ENCODE measurements at regions of chr4 and their contacts with region 1.

Region 1: DNA sequence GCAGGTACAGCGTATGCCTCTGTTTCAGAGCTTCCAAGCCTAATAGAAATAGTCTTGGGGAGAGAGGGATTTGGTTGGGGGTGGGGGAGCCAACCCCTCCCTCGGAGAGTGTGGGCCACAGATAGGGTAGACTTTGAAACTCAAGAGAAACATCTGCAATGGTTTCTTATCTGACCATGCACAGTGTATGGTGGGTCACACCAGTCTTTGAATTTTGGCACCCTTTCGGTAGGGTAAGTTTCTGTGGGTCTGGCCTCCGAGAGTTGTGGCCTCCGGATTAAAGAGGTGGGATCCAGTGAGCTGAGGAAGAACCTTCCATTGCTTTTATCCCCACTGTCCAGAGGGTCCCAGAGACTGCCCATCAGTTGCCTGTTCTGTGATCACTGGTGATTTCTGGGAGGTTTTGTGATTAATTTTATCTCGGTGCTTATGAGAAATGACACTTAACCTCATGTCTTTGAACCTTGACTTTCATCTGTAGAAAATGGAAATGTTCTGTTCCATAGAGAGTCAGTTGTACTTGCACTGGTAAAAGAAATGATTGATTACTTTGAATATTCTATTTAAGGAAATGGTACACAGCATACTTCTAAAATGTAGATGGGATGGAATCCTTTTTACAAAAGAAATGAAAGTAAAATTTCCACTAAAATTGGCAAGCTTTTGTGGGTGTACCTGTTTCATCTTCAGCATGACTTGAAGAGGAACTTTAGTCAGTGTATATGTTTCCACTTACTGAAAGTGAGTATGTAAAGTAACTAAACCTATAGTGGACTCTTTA is 62.7 kb downstream of the TMEM131L start:
- DNase-seq: no peak
- ATAC-seq: peak; percentile 55
- H3K4me3 Mint-ChIP-seq: peak overlapping the region; percentile 75
- H3K27ac Mint-ChIP-seq: peak overlapping the region; percentile 91
- H3K4me1 Mint-ChIP-seq: peaks cover 87% of the 10 kb centered on the region
- H3K27me3 Mint-ChIP-seq: no peaks in the 10 kb centered on the region

Region 2: GRCh38 chr4:153541456-153542096 is 12.7 kb after region 1 on chr4:
- CTCF ChIA-PET with region 1: interaction called, 22 read pairs
- POLR2A ChIA-PET with region 1: interaction called, 4 read pairs
- DNase-seq: peak; percentile 38
- ATAC-seq: peak; percentile 66
- H3K4me3 Mint-ChIP-seq: no peak overlapping the region
- H3K27ac Mint-ChIP-seq: peak overlapping the region; percentile 27
- H3K4me1 Mint-ChIP-seq: peaks cover 60% of the 10 kb centered on the region
- H3K27me3 Mint-ChIP-seq: no peaks in the 10 kb centered on the region

Region 3: GRCh38 chr4:153628796-153629315 is 100.0 kb after region 1 on chr4:
- CTCF ChIA-PET with region 1: no interaction called
- POLR2A ChIA-PET with region 1: no interaction called
- DNase-seq: no peak
- ATAC-seq: no peak
- H3K4me3 Mint-ChIP-seq: no peak overlapping the region
- H3K27ac Mint-ChIP-seq: peak overlapping the region; percentile 18
- H3K4me1 Mint-ChIP-seq: no peaks in the 10 kb centered on the region
- H3K27me3 Mint-ChIP-seq: no peaks in the 10 kb centered on the region

Region 4: DNA sequence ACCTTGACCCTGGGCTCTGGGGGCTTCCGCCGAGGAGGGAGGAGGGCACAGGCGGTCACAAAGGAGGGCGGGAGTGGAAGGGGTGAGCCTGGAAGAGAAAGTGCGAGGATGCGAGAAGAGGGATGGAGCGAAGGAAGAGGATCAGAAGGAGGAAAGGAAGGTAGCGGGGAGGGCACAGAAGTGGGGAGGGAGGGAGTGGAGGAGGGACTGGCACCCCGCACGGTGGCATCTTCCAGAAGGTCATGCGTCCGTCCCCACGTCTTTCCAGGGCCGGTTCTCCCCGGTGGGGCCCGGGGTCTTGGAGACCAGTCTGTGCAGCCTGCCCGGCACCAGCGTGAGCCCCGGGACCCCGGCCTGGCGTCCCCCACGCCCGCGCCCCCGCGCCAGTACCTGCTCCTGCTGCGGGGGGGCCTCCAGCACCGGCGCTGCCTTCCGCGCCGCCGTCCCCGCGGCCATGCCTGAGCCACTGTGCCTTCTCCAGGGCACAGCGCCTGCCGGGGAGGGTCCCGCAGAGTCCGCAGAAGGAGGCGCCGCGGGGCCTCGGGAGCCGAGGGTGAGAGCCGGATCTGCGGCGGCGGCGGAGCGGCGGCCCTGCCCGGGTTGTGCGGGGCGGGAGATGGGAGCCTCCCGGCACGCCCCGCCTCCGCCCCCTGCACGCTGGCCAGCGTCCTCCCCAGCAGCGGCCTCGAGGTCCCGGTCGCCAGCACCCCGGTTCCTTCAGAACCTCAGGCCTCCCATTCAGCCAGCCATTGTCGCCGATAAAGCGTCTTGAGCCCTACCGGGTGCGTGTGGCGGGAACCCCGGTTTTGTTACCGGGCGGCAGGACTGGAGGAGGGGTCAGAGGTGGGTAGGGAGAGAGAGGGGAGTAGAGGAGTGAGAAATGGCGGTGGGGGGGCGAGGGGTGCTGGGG is 230.8 kb after region 1 on chr4 and contains the start of gene RNF175:
- CTCF ChIA-PET with region 1: no interaction called
- POLR2A ChIA-PET with region 1: no interaction called
- DNase-seq: no peak
- ATAC-seq: peak; percentile 73
- H3K4me3 Mint-ChIP-seq: peak within 1 kb of the TSS; percentile 32
- H3K27ac Mint-ChIP-seq: no peak within 1 kb of the TSS
- H3K4me1 Mint-ChIP-seq: no peaks in the 10 kb centered on the region
- H3K27me3 Mint-ChIP-seq: peaks cover 43% of the 10 kb centered on the region
- total RNA-seq, gene RNF175: not detected

Measured in activated CD8-positive, alpha-beta T cell treated with anti-CD3 and anti-CD28 coated beads, Interleukin-2, amount 10 ng/mL, durations not matched to agents 7 days and 5 days (primary cell).